T-cell (primary cell): ENCODE measurements at regions of chr5 and their contacts with region 1.

Region 1: GRCh38 chr5:87121304-87122150 is 146.2 kb upstream of the RASA1 start:
- DNase-seq: peak in 25 of 35 experiments; percentile 1 to 70 (median 13)
- ATAC-seq: peak; percentile 89 to 93 (median 91)
- H3K4me3 ChIP-seq: no peak overlapping the region
- H3K4me3 Mint-ChIP-seq: peak overlapping the region; percentile 34 to 57 (median 38)
- H3K27ac ChIP-seq: peak overlapping the region; percentile 60
- H3K27ac Mint-ChIP-seq: peak overlapping the region; percentile 91 to 92
- H3K4me1 ChIP-seq: peaks cover 18 to 19% of the 10 kb centered on the region in 2 experiments
- H3K4me1 Mint-ChIP-seq: peaks cover 44 to 52% (median 49%) of the 10 kb centered on the region in 3 donors
- H3K27me3 ChIP-seq: no peaks in the 10 kb centered on the region
- H3K27me3 Mint-ChIP-seq: no peaks in the 10 kb centered on the region

Region 2: DNA sequence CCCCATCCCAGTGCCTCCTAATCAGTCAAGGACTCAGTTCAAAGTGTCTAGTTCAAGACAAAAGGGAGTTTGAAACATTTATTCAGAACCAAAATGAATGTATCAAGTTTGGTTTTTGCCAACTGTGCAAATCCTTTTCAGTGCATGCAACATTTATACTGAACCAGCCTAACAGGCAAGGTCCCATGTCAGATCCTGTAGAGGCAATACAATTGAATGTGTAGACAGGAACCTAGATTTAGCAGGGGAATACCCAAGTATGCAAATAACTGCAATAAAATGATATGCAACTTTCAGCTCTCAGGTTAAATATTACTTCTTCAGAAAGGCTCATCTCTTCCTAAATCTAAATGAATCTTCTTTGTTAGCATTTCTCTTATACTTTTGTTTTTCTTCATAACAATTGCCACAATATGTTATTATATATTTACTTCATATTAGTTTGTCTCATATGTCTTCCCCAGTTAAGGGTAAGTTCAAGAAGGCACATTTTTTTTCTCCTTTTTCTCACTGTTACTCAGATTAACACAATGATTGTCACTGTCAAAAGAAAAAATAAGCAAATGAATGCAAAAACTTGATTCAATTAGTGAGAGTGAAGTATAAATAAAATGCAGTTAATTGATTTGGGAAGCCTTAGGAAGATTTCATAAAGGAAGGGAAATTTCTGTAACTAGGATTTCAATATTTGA is 17.8 kb before region 1 on chr5:
- CTCF ChIA-PET with region 1: interaction called in 1 of 2 experiments, 10 read pairs
- POLR2A ChIA-PET with region 1: interaction called in 1 of 2 experiments, 5 read pairs
- DNase-seq: no peak
- ATAC-seq: no peak
- H3K4me3 ChIP-seq: no peak overlapping the region
- H3K4me3 Mint-ChIP-seq: no peak overlapping the region
- H3K27ac ChIP-seq: no peak overlapping the region
- H3K27ac Mint-ChIP-seq: peak overlapping the region in 1 of 2 donors; percentile 44
- H3K4me1 ChIP-seq: peaks cover 2% of the 10 kb centered on the region in 2 experiments
- H3K4me1 Mint-ChIP-seq: peaks cover 10 to 16% (median 16%) of the 10 kb centered on the region in 3 donors
- H3K27me3 ChIP-seq: no peaks in the 10 kb centered on the region
- H3K27me3 Mint-ChIP-seq: no peaks in the 10 kb centered on the region

Region 3: DNA sequence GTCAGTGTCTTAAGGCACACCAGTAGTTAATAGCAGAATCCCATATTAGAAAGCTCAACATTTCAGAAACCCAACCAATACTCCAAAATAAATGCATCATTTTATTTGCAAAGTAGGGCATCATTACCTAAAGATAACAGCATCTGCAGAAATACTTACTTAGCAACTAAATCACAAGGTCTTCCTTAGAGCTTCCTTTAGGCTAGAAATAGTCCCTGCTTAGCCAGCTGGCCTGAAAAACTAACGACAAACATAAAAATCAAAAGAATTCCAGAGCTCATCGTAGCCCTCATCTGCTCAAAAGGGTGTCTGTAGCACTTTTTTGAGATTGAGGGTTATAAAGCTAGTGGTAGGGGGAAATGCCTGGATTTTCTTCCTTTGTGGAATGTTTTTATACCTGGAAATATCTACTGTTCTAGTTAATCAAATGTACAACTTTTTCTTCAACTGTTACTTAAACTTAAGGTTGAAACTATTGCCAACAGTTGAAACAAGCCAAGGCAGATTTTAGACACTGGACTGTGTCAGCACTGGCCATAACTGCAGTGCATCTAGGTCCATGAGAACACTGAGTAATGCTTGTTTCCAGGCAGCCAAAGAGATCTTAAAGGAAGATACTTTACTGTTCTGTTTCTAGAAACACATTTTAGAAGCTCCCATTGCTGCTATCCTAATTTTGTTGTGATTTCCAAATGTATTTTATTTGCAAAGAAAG is 16.7 kb after region 1 on chr5:
- CTCF ChIA-PET with region 1: no interaction called
- POLR2A ChIA-PET with region 1: interaction called in 1 of 2 experiments, 10 read pairs
- DNase-seq: no peak
- ATAC-seq: no peak
- H3K4me3 ChIP-seq: no peak overlapping the region
- H3K4me3 Mint-ChIP-seq: no peak overlapping the region
- H3K27ac ChIP-seq: no peak overlapping the region
- H3K27ac Mint-ChIP-seq: no peak overlapping the region
- H3K4me1 ChIP-seq: no peaks in the 10 kb centered on the region
- H3K4me1 Mint-ChIP-seq: peaks cover 0 to 7% (median 0%) of the 10 kb centered on the region in 3 donors
- H3K27me3 ChIP-seq: no peaks in the 10 kb centered on the region
- H3K27me3 Mint-ChIP-seq: no peaks in the 10 kb centered on the region

Region 4: GRCh38 chr5:87151547-87151946 is 30.0 kb after region 1 on chr5:
- CTCF ChIA-PET with region 1: no interaction called
- POLR2A ChIA-PET with region 1: interaction called in 1 of 2 experiments, 10 read pairs
- DNase-seq: no peak
- ATAC-seq: no peak
- H3K4me3 ChIP-seq: no peak overlapping the region
- H3K4me3 Mint-ChIP-seq: no peak overlapping the region
- H3K27ac ChIP-seq: no peak overlapping the region
- H3K27ac Mint-ChIP-seq: no peak overlapping the region
- H3K4me1 ChIP-seq: no peaks in the 10 kb centered on the region
- H3K4me1 Mint-ChIP-seq: peaks cover 2 to 8% (median 5%) of the 10 kb centered on the region in 3 donors
- H3K27me3 ChIP-seq: no peaks in the 10 kb centered on the region
- H3K27me3 Mint-ChIP-seq: no peaks in the 10 kb centered on the region

Region 5: DNA sequence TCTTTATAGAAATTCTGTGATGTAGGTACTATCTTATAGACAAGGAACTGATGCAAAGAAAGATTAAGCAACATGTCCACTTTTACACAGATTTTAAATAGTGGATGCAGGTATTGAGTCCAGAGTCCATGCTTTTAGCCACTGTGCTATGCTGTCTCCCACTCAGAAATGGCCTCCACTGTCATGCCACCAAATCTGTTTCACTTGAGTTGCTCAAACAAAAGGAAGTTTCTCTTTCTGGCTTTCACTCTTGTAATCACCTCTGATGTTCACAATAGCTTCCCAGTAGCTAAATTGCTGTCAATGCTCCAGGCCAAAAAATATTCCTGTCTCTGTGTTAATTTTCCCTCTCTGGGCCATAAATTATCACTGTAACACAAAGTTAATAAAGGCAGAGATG is 69.2 kb after region 1 on chr5:
- CTCF ChIA-PET with region 1: no interaction called
- POLR2A ChIA-PET with region 1: no interaction called
- DNase-seq: no peak
- ATAC-seq: no peak
- H3K4me3 ChIP-seq: no peak overlapping the region
- H3K4me3 Mint-ChIP-seq: no peak overlapping the region
- H3K27ac ChIP-seq: no peak overlapping the region
- H3K27ac Mint-ChIP-seq: peak overlapping the region; percentile 5 to 59
- H3K4me1 ChIP-seq: peaks cover 0 to 4% of the 10 kb centered on the region in 2 experiments
- H3K4me1 Mint-ChIP-seq: peaks cover 9 to 33% (median 24%) of the 10 kb centered on the region in 3 donors
- H3K27me3 ChIP-seq: no peaks in the 10 kb centered on the region
- H3K27me3 Mint-ChIP-seq: no peaks in the 10 kb centered on the region